SK-N-SH (cell line): ENCODE measurements at regions of chr14 and their contacts with region 1.

Region 1: GRCh38 chr14:24114536-24115450 is at the starts of genes DCAF11 and NRL:
- DNase-seq: peak; percentile 95
- H3K4me3 ChIP-seq: peak within 1 kb of the TSS; percentile 71 to 88
- H3K27ac ChIP-seq: peak within 1 kb of the TSS; percentile 97 to 99
- H3K4me1 ChIP-seq: peaks cover 10 to 17% of the 10 kb centered on the region in 2 experiments
- H3K27me3 ChIP-seq: no peaks in the 10 kb centered on the region
- CTCF ChIP-seq: no peak
- EP300 ChIP-seq: peak in 1 of 2 experiments; percentile 25; a peak in 1 of 4 replicates
- RAD21 ChIP-seq: no peak
- polyA plus RNA-seq, gene DCAF11: 34.6 and 36.7 TPM in 2 replicates
- polyA plus RNA-seq, gene NRL: 0.76 and 0.88 TPM in 2 replicates

Region 2: DNA sequence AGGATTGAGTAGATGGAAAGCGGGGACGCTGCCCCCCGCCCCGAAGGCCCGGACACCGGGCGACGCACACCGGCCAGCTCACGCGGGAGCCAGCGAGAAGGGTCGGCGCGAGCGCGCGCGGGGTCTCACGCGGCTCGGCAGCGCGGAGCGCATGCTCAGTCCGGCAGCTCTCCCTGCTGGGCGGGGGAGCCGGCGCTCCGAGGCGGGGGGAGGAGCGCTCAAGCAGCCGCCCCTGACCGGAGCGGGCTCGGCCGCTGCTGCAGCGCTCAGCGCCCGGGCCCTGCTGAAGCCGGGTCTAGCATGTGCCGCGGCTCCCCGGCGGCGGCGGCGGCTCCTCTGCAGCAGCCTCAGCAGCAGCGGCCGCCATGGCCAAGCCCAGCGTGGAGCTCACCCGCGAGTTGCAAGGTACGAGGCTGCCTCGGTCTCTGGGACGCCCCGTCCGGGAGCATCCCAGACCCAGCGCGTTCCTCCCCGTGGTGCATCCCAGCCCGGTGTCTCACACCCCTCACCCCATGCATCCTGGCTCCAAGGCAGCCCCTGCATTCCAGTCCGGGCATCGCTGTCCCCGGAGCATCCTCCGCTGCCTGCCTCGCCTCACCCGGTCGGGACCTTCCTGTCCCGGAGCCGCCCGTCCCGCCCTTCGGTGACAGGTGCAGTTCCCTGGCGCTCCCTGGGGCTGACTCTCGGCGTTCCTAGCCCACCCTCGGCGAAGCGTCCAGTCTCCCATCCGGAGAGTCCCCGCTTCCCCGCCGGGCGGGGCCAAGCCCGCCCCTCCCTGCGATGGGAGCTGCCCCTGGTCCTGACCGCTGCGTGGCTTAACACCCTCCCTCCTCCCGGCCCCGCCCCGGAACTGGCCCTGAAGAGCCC is 62.8 kb before region 1 on chr14 and contains the start of gene CARMIL3:
- CTCF ChIA-PET with region 1: interaction called, 1,159 read pairs
- POLR2A ChIA-PET with region 1: interaction called, 11 read pairs
- DNase-seq: peak; percentile 97
- H3K4me3 ChIP-seq: peak within 1 kb of the TSS; percentile 72 to 80
- H3K27ac ChIP-seq: peak within 1 kb of the TSS in 1 of 2 experiments; percentile 81; a peak in 2 of 4 replicates
- H3K4me1 ChIP-seq: peaks cover 0 to 18% of the 10 kb centered on the region in 2 experiments; a peak in 1 of 4 replicates
- H3K27me3 ChIP-seq: no peaks in the 10 kb centered on the region; the same call in 1 of the 2 replicates
- CTCF ChIP-seq: no peak
- EP300 ChIP-seq: no peak
- RAD21 ChIP-seq: no peak
- polyA plus RNA-seq, gene CARMIL3: 0.32 and 0.43 TPM in 2 replicates

Region 3: GRCh38 chr14:24058260-24058950 is 56.4 kb before region 1 on chr14:
- CTCF ChIA-PET with region 1: interaction called, 1,159 read pairs
- POLR2A ChIA-PET with region 1: interaction called, 5 read pairs
- DNase-seq: peak; percentile 91
- H3K4me3 ChIP-seq: no peak overlapping the region; a peak in 1 of 4 replicates
- H3K27ac ChIP-seq: no peak overlapping the region
- H3K4me1 ChIP-seq: peaks cover 0 to 3% of the 10 kb centered on the region in 2 experiments; a peak in 1 of 4 replicates
- H3K27me3 ChIP-seq: no peaks in the 10 kb centered on the region
- CTCF ChIP-seq: peak; percentile 84
- EP300 ChIP-seq: no peak
- RAD21 ChIP-seq: peak; percentile 99

Region 4: DNA sequence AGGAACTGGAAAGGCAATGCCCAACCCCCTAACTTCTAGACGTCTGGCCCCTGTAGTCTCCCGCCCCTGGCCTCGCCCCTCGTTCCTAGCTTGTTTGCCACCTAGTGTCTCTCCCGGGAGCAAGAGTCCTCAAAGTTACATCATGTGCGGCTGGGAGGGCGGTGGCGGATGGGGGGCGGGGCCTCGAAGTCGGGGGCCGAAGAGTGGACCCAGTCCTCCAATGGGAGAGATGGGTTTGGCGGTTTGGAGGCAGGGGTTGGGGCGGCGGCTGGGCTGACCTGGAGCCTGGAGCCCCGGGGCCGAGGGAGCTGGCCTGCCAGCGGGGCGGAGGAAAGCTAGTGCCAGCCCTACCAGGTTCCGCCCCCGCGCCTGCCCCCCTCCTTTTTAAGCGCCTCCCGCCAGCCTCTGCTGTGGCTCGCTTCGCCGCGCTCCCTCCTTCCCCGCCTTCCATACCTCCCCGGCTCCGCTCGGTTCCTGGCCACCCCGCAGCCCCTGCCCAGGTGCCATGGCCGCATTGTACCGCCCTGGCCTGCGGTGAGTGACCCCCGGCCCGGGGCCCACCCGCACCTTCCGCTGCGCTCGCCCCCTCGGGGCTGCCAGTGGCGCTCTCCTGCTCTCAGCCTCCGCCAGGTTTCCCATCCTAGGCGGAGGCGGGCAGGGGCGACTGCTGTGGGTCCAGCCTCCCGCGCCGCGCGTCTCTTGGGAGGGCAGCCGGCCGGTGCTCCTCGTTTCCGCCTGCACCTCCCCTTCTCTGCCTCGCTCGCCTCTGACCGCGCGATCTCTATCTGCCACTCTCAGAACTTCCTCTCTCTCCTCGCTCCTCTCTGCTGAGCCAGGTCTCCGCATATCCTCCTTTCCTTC is 20.7 kb before region 1 on chr14 and contains the start of gene PCK2:
- CTCF ChIA-PET with region 1: interaction called, 219 read pairs
- POLR2A ChIA-PET with region 1: interaction called, 26 read pairs
- DNase-seq: peak; percentile 97
- H3K4me3 ChIP-seq: peak within 1 kb of the TSS; percentile 80 to 92
- H3K27ac ChIP-seq: peak within 1 kb of the TSS; percentile 73 to 93
- H3K4me1 ChIP-seq: peaks cover 12 to 19% of the 10 kb centered on the region in 2 experiments; a peak in 2 of 4 replicates
- H3K27me3 ChIP-seq: no peaks in the 10 kb centered on the region
- CTCF ChIP-seq: 0 out of 2 replicates have a peak, but pooled peaks have one; percentile 6
- EP300 ChIP-seq: 0 out of 4 replicates have a peak, but pooled peaks of 1 of the 2 experiments have one; percentile 10
- RAD21 ChIP-seq: no peak
- polyA plus RNA-seq, gene PCK2: 16.2 and 16.6 TPM in 2 replicates

Region 5: DNA sequence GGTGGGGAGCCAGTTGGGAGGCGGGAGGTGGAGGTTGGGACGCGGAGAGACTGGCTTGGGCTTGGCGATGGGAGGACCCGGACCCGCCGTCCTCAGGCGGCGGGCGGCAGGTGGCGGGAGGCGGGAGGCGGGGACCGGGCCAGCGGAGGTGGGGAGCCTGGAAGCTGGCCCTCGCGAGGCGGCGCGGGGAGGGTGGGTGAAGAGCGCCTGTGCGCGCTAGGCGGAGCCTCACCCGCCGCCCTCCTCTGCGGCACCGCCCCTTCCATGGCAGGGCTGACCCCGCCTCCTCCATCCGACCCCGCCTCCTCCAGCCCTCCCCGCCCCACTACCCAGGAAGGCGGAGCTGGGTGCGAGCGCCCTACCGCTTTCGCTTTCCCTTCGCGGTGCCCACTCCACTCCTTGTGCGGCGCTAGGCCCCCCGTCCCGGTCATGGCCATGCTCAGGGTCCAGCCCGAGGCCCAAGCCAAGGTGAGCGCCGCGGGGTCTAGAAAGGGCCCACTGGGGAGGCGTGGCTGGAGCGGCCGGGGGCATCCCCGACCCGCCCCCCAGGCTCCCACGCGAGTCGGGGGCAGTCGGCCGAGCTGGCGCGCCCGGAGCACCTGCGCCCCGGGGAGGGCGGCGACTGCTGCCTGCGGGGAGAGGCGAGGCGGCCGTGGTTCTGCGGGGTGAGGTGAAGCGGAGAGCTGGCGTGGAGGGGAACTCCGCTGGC is 21.2 kb after region 1 on chr14 and contains the start of gene PSME1:
- CTCF ChIA-PET with region 1: interaction called, 3 read pairs
- POLR2A ChIA-PET with region 1: interaction called, 21 read pairs
- DNase-seq: peak; percentile 98
- H3K4me3 ChIP-seq: peak within 1 kb of the TSS; percentile 82 to 91
- H3K27ac ChIP-seq: peak within 1 kb of the TSS; percentile 52 to 83
- H3K4me1 ChIP-seq: peaks cover 6 to 36% of the 10 kb centered on the region in 2 experiments; a peak in 2 of 4 replicates
- H3K27me3 ChIP-seq: no peaks in the 10 kb centered on the region
- CTCF ChIP-seq: no peak
- EP300 ChIP-seq: no peak
- RAD21 ChIP-seq: no peak; the same call in 1 of the 2 replicates
- polyA plus RNA-seq, gene PSME1: 154 and 287 TPM in 2 replicates

Region 6: DNA sequence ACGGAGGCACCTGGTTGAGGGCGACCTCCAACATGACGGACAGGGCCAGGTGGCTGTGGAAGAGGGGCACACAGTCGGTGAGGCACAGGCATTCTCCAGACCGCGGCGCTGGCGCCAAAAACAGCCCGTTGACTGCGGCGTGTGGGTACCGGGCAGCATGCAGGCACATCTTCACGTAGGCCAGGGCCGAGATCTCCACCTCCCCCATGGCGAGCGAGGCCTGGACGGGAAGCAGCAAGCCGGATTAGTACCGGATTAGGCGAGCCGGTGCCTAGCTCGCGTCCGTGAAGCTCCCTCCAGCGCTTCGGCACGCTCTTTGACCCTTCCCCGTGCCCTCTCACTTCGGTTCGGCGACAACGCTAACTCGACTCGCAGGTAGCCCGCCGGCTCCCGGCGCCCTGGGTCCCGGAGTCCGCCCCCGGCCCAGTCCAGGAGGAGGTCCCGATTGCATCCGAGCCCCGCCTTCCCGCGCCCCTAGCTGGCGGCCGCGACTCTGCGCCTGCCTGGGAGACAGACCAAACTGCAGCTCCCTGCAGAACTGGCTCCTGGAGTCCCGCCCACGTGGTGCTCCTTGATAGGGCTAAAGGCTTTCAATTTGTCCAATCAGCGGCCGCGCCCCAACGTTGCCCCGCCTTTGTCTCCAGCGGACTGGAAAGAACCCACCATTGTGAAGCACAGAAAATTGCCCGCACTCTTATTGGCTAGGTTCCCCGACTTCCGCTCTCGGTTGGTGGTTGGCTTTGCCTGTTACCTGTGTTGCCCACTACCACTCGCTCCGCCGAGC is 26.5 kb after region 1 on chr14 and contains the start of gene EMC9:
- CTCF ChIA-PET with region 1: interaction called, 3 read pairs
- POLR2A ChIA-PET with region 1: interaction called, 28 read pairs
- DNase-seq: peak; percentile 94
- H3K4me3 ChIP-seq: peak within 1 kb of the TSS; percentile 90 to 93
- H3K27ac ChIP-seq: peak within 1 kb of the TSS; percentile 82 to 98
- H3K4me1 ChIP-seq: peaks cover 11 to 42% of the 10 kb centered on the region in 2 experiments; a peak in 3 of 4 replicates
- H3K27me3 ChIP-seq: no peaks in the 10 kb centered on the region
- CTCF ChIP-seq: peak; percentile 39
- EP300 ChIP-seq: no peak; a peak in 1 of 4 replicates
- RAD21 ChIP-seq: no peak
- polyA plus RNA-seq, gene EMC9: 14.5 and 19.3 TPM in 2 replicates

Region 7: GRCh38 chr14:24146978-24147760 is 32.4 kb after region 1 on chr14 and contains the start of gene RNF31:
- CTCF ChIA-PET with region 1: interaction called, 6 read pairs
- POLR2A ChIA-PET with region 1: interaction called, 28 read pairs
- DNase-seq: peak; percentile 96
- H3K4me3 ChIP-seq: peak within 1 kb of the TSS; percentile 93 to 98
- H3K27ac ChIP-seq: peak within 1 kb of the TSS; percentile 92 to 97
- H3K4me1 ChIP-seq: peaks cover 11 to 22% of the 10 kb centered on the region in 2 experiments
- H3K27me3 ChIP-seq: no peaks in the 10 kb centered on the region
- CTCF ChIP-seq: no peak
- EP300 ChIP-seq: no peak
- RAD21 ChIP-seq: no peak
- polyA plus RNA-seq, gene RNF31: 19.2 and 20.4 TPM in 2 replicates